Vagina (tissue), 2 donors: ENCODE measurements at regions of chr2 and their contacts with region 1.

Region 1: DNA sequence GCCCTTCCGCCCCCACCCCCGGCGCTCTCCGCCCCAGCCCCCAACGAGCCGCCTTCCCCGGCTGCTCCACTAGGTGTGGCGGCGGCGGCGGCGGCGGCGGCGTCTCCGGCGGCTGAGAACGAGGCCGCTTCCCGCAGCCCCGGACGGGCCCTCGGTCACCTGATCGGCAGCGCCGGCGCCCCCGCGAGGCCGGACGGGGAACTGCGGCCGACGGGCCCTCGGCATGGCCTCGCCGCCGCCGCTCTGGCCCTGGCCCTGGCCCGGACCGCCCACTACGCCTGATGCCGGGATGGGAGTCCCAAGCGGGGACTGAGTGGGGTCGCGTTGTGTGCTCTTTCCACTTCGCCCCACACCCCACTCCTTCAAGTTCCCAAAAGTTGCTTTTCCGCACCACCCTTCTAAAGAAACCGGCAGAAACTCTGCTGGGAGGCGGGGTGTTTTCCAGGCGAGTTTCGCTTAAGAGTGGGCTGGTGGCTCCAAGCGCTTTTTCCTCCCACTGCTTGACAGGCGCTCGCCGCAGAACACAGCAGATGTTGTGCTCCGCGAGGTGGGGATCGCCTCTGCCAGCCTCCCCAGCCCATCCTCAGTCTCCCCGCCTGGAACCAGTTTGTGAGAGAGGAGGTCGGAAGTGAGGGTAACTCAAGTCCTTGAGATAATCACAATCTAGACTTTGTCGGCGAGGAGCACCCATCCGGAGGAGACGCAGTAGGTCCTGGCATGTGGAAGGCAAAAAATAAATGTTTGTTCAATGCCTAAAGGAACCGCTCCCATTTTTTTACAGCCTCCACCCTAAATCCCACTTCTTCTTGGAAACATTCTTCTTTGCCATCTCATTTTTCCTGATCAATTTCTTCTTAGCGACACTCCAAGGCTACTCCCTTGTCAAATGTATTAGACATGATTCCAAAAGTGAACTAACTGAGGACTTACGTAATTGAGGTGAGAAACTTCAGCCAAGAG is at the start of gene NCKAP1:
- DNase-seq: peak in 1 of 2 donors; percentile 94
- H3K4me3 ChIP-seq: peak within 1 kb of the TSS; percentile 88 to 92
- H3K27ac ChIP-seq: peak within 1 kb of the TSS; percentile 99
- H3K4me1 ChIP-seq: peaks cover 35% of the 10 kb centered on the region
- H3K27me3 ChIP-seq: no peaks in the 10 kb centered on the region
- CTCF ChIP-seq: peak; percentile 61 to 96 (median 79)
- POLR2A ChIP-seq: peak in 1 of 2 donors; percentile 69
- total RNA-seq, gene NCKAP1: 135 TPM

Region 2: DNA sequence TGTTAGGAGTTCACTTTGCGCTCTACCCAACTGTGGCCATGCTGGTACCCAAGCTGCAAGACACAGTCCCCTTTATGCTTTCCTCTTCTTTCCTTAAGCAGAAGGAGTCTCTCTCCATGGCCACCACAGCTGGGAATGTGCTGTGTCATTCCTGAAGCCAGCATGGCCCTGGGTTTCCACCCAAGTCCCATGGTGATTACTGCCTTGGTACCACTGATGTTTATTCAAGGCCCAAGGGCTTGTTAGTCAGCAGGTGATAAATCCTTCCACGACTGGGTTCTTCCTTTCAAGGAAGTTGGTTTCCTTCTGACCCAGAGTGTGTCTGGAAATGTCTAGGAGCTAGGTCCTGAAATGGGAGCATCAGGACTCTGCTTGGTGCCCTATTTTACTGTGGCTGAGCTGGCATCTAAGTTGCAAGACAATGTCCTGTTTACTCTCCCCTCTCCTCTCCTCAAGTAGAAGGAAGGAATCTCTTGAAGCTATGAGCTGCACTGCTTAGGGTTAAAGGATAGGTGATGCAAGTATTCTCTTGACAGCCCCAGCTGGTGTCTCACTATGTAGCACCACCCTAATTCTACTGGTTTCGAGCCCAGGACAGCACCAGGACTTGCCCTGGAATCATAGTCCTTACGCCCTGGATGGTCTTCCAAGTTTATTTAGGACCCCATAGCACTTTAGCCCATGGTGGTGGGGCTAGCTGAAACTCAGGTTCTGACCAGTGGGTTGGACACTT is 66.9 kb after region 1 on chr2:
- intact Hi-C with region 1: no loop called
- DNase-seq: no peak
- H3K4me3 ChIP-seq: no peak overlapping the region
- H3K27ac ChIP-seq: no peak overlapping the region
- H3K4me1 ChIP-seq: no peaks in the 10 kb centered on the region
- H3K27me3 ChIP-seq: no peaks in the 10 kb centered on the region
- CTCF ChIP-seq: no peak
- POLR2A ChIP-seq: no peak

Region 3: DNA sequence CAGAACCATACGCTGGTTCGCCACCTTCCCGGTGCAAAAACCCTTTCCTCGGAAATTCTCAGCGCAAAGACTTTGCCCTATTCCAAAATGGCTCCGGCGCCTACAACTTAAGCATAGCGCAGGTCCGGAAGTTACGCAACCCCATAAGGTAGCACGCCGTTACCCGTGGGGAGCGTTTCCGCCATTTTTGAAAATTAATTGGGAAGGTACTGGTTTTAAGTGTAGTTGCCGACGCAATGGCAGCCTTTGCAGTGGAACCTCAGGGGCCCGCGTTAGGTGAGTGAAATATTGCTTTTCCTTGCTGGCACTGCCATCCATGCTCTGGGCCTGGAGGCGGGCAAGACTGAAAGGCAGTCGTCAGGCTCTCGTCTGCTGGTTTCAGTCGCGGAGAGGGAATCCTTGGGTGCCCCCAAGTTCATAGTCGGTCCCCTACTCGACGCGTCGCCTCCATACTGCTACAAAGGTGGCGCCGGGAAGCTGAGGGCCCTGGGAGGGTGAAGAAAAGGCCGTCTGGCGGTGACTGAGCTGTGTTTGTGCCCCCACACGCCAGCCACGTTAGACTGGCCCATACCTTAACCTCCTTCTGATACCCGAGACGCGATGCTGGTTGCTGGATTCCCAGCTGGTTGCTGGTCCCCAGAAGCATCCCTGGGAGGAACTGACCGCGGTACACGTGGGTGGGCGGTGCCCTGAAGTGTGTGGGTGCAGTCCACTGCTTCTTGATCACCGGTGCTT is 85.8 kb after region 1 on chr2 and contains the start of gene NUP35:
- intact Hi-C with region 1: loop called (anchors 5 kb)
- DNase-seq: peak in 1 of 2 donors; percentile 93
- H3K4me3 ChIP-seq: peak within 1 kb of the TSS; percentile 74 to 87
- H3K27ac ChIP-seq: peak within 1 kb of the TSS; percentile 83
- H3K4me1 ChIP-seq: peaks cover 31% of the 10 kb centered on the region
- H3K27me3 ChIP-seq: no peaks in the 10 kb centered on the region
- CTCF ChIP-seq: no peak
- POLR2A ChIP-seq: peak in 1 of 2 donors; percentile 21
- total RNA-seq, gene NUP35: 18.4 TPM

Region 4: GRCh38 chr2:183242937-183243336 is 204.3 kb after region 1 on chr2:
- intact Hi-C with region 1: no loop called
- DNase-seq: no peak
- H3K4me3 ChIP-seq: no peak overlapping the region
- H3K27ac ChIP-seq: no peak overlapping the region
- H3K4me1 ChIP-seq: no peaks in the 10 kb centered on the region
- H3K27me3 ChIP-seq: no peaks in the 10 kb centered on the region
- CTCF ChIP-seq: no peak
- POLR2A ChIP-seq: no peak